WTC11 (cell line): ENCODE measurements at regions of chr7 and their contacts with region 1.

Region 1: GRCh38 chr7:42227936-42228591 is 8.9 kb downstream of the GLI3 start:
- DNase-seq: peak; percentile 59
- ATAC-seq: peak; percentile 49
- H3K4me3 Mint-ChIP-seq: peak overlapping the region; percentile 73
- H3K27ac Mint-ChIP-seq: peak overlapping the region; percentile 100
- H3K4me1 Mint-ChIP-seq: peaks cover 87% of the 10 kb centered on the region
- H3K27me3 Mint-ChIP-seq: no peaks in the 10 kb centered on the region
- CTCF ChIP-seq: no peak

Region 2: DNA sequence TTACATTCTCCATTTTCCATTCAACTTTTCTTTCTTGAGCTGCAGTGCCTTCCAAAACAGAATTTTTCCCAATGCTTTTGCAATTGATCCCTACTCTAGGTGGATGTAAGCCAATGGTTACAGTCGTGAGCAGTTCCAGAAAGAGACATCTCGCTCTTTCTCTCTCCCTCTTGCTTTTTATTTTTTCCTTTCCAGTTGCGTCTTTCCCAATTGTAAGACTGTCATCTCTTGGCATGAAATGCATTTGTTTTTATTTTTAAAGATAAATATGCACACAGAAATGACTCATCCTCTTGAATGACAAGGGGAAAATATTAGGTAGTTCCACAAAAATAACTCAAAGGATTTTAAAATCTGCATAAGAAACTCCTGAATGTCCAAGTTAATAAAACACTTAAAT is 16.1 kb before region 1 on chr7:
- CTCF ChIA-PET with region 1: interaction called, 3 read pairs
- POLR2A ChIA-PET with region 1: interaction called, 11 read pairs
- DNase-seq: no peak
- ATAC-seq: no peak
- H3K4me3 Mint-ChIP-seq: no peak overlapping the region
- H3K27ac Mint-ChIP-seq: peak overlapping the region; percentile 13
- H3K4me1 Mint-ChIP-seq: peaks cover 71% of the 10 kb centered on the region
- H3K27me3 Mint-ChIP-seq: no peaks in the 10 kb centered on the region
- CTCF ChIP-seq: no peak

Region 3: DNA sequence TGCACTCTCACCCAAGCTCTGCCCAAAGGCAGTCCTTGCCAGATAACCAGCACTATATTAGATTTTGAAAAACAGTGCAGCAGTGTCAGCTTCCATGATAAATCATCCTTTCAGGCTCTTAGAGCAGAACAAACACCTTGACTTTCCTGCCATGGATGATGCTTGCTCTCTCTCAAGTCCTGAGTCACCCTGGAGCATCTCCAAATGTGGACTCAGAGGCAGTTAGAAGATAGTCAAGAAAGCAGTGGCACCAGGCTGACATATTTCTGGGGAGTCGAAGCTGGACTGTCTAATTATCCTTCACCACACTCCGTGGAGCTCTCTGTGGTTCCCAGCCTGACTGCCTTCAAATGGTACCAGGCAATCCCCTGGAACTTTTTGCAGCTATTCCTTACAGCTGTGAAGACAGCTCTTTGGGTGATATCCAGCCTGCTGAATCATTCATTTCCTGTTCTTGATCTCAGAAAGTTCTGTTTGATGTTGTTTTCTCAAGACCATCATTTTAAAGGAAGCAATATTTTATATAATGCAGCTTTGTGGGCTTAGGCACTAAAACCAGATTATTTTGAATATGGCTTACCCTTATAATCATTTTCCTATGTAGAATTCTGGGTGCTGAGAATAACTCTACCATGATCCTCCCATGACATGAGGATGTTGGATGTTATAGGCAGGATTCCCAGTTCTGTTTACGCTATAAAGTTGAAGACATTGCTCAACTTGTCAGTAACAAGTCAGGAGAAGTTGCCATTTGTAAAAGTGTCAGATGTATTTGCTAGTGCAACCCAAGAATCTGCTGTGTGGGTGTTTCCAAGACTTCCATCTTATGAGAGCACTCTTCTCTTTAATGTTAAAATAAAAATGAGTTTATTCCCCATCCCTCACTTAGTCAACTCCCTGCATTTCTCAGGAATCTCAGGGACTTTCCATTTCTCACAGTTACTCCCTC is 450.0 kb after region 1 on chr7:
- CTCF ChIA-PET with region 1: no interaction called
- POLR2A ChIA-PET with region 1: no interaction called
- DNase-seq: no peak
- ATAC-seq: no peak
- H3K4me3 Mint-ChIP-seq: no peak overlapping the region
- H3K27ac Mint-ChIP-seq: no peak overlapping the region
- H3K4me1 Mint-ChIP-seq: 0 out of 2 replicates have a peak, but pooled peaks cover 7% of the 10 kb centered on the region
- H3K27me3 Mint-ChIP-seq: no peaks in the 10 kb centered on the region
- CTCF ChIP-seq: no peak